Sigmoid colon (tissue), 7 donors: ENCODE measurements at regions of chr17 and their contacts with region 1.

Region 1: GRCh38 chr17:4858882-4859260 is 25.7 kb downstream of the MINK1 start:
- DNase-seq: peak; percentile 81
- H3K4me3 ChIP-seq: no peak overlapping the region
- H3K27ac ChIP-seq: peak overlapping the region; percentile 51 to 71 (median 58)
- H3K4me1 ChIP-seq: peaks cover 0 to 21% (median 19%) of the 10 kb centered on the region in 4 donors
- H3K27me3 ChIP-seq: no peaks in the 10 kb centered on the region
- CTCF ChIP-seq: no peak
- EP300 ChIP-seq: no peak
- POLR2A ChIP-seq: no peak

Region 2: GRCh38 chr17:4833178-4833940 is 25.5 kb before region 1 on chr17 and contains the start of gene MINK1:
- intact Hi-C with region 1: loop called (anchors 2 kb)
- DNase-seq: peak; percentile 94
- H3K4me3 ChIP-seq: peak within 1 kb of the TSS; percentile 75 to 99 (median 84)
- H3K27ac ChIP-seq: peak within 1 kb of the TSS; percentile 85 to 94 (median 88)
- H3K4me1 ChIP-seq: peaks cover 0 to 34% (median 18%) of the 10 kb centered on the region in 4 donors
- H3K27me3 ChIP-seq: no peaks in the 10 kb centered on the region
- CTCF ChIP-seq: no peak
- EP300 ChIP-seq: no peak
- POLR2A ChIP-seq: peak; percentile 65 to 73
- total RNA-seq, gene MINK1: 17.1 to 43.8 (median 21.0) TPM

Region 3: GRCh38 chr17:4986951-4987766 is 128.3 kb after region 1 on chr17 and contains the start of gene CAMTA2:
- intact Hi-C with region 1: no loop called
- DNase-seq: peak; percentile 95
- H3K4me3 ChIP-seq: peak within 1 kb of the TSS; percentile 68 to 97 (median 80)
- H3K27ac ChIP-seq: peak within 1 kb of the TSS; percentile 93 to 97 (median 95)
- H3K4me1 ChIP-seq: peaks cover 0 to 31% (median 25%) of the 10 kb centered on the region in 4 donors
- H3K27me3 ChIP-seq: no peaks in the 10 kb centered on the region
- CTCF ChIP-seq: peak; percentile 75 to 83 (median 78)
- EP300 ChIP-seq: no peak
- POLR2A ChIP-seq: peak; percentile 46 to 64
- total RNA-seq, gene CAMTA2: 9.9 to 24.6 (median 21.7) TPM